ENCODE measurements at regions of chr20 and their contacts with region 1.

Region 1: DNA sequence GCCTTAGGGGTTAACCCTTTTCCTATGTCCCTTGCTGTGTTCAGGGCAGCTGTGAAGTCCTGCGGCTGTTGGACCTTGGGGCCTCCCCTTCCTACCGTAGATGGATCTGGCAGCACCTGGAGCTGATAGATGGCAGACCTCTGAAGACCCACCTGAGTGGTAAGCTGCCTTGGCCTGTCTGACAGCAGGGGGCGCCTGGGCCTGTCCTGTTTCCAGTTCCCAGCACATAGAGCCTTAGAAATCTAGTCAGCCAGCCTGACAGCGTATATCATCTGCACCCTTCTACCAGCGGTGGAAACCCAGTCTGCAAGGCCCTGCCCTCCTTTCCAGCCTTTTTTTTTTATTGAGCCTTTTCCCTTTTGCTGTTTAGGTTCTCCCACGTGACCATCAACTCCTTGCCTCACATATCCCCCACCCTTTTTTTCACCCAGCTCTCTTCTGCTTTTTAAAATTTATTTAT is 26.6 kb downstream of the CNBD2 start:
- DNase-seq: peak; percentile 76
- CTCF ChIP-seq: peak; percentile 92

Region 2: DNA sequence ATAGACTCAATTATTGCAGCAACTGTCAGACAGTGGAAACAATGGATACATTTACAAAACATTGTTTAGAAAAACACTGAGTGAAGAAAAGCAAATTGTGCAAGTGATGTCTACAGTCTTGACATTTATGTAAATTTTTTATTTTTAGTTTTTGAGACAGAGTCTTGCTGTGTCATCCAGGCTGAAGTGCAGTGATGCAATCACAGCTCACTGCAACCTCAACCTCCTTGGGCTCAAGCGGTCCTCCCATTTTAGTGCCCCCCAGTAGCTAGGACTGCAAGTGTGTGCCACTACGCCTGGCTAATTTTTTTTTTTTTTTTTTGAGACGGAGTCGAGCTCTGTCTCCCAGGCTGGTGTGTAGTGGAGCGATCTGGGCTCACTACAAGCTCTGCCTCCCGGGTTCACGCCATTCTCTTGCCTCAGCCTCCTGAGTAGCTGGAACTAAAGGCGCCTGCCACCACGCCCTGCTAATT is 16.9 kb before region 1 on chr20:
- CTCF ChIA-PET with region 1: interaction called, 140 read pairs
- POLR2A ChIA-PET with region 1: no interaction called
- DNase-seq: no peak
- CTCF ChIP-seq: no peak

Region 3: DNA sequence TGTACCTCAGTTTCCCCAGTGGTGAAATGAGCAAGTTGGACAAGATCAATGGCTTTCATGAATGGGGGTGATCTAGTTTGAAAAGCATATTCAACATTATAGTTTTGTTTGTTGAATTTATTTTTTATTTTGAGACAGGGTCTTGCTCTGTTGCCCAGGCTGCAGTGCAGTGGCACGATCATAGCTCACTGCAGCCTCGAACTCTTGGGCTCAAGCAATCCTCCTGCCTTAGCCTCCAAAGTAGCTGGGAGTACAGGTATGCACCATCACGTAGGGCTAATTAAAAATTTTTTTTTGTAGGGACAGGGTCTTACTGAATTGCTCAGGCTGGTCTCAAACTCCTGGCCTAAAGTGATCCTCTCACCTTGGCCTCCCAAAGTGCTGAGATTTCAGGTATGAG is 36.8 kb after region 1 on chr20:
- CTCF ChIA-PET with region 1: interaction called, 12 read pairs
- POLR2A ChIA-PET with region 1: no interaction called
- DNase-seq: no peak
- CTCF ChIP-seq: no peak

Region 4: GRCh38 chr20:36128463-36129159 is 133.6 kb after region 1 on chr20:
- CTCF ChIA-PET with region 1: interaction called, 495 read pairs
- POLR2A ChIA-PET with region 1: no interaction called
- DNase-seq: no peak
- CTCF ChIP-seq: no peak

Region 5: DNA sequence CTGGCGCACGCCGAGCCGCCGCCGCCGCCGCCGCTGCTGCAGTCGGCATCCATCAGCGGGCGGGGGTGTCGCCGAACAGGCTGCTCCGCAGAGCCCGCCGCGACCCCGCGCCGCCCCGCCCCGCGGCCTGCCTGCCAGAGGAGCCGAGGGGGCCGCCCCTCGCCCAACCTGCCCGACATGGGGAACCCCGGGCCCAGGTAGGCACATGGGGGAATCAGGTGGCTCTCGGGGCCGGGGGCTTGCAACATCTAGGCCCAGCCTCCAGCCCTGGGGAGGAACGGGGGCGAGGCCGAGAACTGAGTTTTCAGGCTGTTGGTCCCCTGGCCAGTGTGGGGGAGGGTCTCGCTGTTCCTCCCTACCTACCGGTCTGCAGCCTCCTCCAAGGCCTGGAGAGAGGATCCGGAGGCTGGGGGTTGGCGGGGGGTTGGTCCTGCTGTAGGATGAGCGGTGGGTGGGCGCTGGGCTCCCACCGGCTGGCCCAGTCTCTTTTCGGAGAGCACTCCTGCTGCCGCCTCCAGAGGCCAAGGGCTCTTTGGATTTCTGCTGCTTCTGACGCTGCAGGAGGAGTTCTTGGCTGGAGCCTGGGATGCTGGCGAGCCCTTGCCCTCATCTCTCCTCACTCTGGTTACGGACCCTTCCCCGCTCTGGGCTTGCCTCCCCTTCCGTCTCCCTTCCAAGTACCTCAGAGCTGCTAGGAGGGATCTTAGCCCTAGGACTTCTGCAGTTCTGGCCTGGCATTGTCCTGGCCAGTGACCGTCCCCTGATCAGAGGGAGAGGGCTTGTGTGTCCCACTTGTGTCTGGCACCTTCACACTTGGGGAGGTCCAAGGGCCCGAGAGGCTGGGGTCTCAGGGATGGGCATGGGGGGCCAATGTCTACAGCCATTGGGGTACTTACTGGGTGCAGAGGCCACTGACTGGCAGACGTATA is 159.9 kb after region 1 on chr20 and contains the start of gene EPB41L1:
- CTCF ChIA-PET with region 1: interaction called, 495 read pairs
- POLR2A ChIA-PET with region 1: no interaction called
- DNase-seq: no peak
- CTCF ChIP-seq: no peak

Region 6: DNA sequence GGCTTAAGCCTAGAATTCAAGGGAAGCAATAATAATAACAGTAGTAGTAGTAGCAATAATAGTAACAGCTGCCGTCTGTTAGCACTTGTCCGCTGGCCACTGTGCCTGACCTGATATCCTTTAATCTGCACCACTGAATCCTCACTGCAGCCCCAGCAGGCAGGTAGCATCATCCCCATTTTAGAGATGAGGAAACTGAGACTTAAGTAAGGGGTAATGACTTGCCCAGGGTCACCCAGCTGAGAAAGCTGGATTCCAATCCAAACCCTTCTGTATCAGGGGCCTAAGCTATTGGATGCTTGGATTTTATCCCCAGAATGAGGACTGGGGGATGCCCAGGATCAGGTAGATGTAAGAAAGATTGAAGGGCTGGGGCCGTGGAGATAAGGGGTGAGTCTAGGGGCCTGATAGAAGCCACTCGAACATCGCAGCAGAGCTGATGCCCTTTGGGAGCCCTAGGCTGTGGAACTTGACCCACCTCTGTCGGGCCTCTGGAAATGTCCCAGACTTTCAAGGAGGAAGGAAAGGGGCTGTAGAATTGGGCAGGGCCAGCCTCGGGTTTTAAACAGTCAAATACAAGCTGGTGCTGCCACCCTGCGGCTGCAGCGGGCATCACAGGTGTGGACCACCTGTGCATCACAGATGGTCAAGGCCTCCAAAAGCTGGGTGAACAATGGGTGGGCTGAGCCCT is 444.2 kb after region 1 on chr20:
- CTCF ChIA-PET with region 1: interaction called, 12 read pairs
- POLR2A ChIA-PET with region 1: no interaction called
- DNase-seq: peak; percentile 82
- CTCF ChIP-seq: peak; percentile 99

Region 7: DNA sequence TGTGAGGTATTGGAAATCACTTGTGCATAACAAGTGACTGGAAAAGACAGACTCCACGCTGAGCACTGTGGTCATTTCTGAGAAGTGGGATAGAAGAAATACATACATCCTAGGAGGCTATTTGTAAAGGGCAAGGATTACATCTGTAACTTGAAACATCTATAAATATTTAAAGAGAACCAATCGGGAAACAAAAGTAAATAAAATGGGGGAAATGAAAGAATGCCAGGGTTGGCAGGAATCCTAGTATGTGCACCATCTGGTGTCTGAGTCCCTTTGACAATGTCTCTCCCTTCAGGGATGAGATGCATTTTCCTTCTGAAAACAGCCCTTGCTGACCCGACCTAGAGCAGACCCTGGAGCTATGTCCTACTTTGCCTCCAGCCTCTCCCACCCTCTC is 1961.1 kb after region 1 on chr20:
- CTCF ChIA-PET with region 1: no interaction called
- POLR2A ChIA-PET with region 1: no interaction called
- DNase-seq: no peak
- CTCF ChIP-seq: no peak

Measured in GM10248 (cell line).